Right ventricle myocardium superior (tissue), 1 donor: ENCODE measurements at regions of chr14 and their contacts with region 1.

Region 1: DNA sequence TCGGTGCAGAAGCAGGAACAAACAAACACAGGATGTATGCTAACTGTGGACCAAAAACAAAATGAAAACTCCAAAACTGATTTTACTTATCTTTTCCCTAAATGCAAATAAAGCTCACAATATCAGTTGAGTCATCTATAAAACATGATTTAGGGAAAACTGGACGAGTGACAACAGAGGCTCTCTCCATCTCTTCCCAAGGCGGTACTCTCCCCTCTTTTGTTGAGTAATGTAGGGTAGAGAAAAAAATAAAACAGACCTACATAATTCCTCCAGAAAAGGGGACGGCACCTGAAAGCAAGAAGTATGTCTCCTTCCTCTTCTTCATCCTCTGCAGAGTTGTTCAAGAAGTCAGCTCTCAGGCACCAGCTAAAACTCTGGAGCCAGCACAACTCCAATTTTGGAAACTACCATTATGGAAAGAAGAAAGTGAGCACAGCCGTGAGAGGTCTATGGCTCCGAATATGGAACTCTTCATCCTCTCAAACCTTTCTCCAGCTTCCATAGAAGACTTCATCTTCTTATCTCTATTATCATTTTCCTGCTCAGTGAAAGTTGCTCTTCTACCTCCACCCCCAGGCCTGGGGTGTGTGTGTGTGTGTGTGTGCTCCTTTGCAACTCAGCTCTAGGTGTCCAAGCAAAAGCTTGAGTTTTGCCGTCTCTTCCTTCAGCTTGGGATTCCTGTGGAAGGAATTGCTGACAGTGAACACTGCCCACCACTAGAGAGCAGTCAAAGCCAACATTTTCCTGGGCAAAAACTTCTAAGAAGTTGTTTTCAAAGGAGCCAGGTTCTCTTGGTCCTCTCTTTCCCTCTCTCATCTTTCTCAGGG is 155.4 kb downstream of the DIO2 start:
- DNase-seq: peak; percentile 20
- ATAC-seq: peak; percentile 55

Region 2: GRCh38 chr14:80850197-80850814 is 794.4 kb after region 1 on chr14:
- intact Hi-C with region 1: loop called (anchors 5 kb)
- DNase-seq: no peak
- ATAC-seq: peak; percentile 51